SK-N-SH (cell line): ENCODE measurements at regions of chr6 and their contacts with region 1.

Region 1: GRCh38 chr6:29589423-29590048 is 4.6 kb downstream of the OR2H2 start:
- DNase-seq: peak; percentile 54
- H3K4me3 ChIP-seq: no peak overlapping the region; a peak in 1 of 4 replicates
- H3K27ac ChIP-seq: no peak overlapping the region
- H3K4me1 ChIP-seq: no peaks in the 10 kb centered on the region; a peak in 1 of 4 replicates
- H3K27me3 ChIP-seq: peaks cover 22% of the 10 kb centered on the region; the same call in 1 of the 2 replicates
- CTCF ChIP-seq: peak; percentile 98
- EP300 ChIP-seq: no peak
- RAD21 ChIP-seq: peak; percentile 90

Region 2: DNA sequence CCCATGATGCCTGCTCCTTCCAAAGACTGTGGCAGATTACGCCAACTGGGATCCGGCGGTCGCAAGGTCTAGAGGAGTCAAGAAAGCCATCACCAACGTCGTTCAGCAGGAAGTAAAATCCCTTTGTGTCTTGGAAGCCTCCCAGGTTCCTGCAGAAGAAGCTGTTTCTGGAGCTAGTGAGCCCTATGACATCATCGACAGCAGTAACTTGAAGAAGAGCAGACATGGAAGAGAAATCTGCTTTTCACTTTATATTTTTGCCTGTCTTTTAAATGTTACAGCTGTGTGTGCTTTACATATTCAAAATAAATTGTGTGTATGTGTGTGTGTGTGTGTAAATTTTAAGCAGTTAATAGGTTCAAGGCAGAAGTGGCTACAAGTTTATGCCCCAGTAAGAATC is 12.0 kb before region 1 on chr6:
- CTCF ChIA-PET with region 1: interaction called, 13 read pairs
- POLR2A ChIA-PET with region 1: no interaction called
- DNase-seq: no peak
- H3K4me3 ChIP-seq: no peak overlapping the region
- H3K27ac ChIP-seq: no peak overlapping the region
- H3K4me1 ChIP-seq: no peaks in the 10 kb centered on the region
- H3K27me3 ChIP-seq: peaks cover 14% of the 10 kb centered on the region; the same call in 1 of the 2 replicates
- CTCF ChIP-seq: no peak
- EP300 ChIP-seq: no peak
- RAD21 ChIP-seq: no peak